Common myeloid progenitor, CD34-positive (primary cell): ENCODE measurements at regions of chr5 and their contacts with region 1.

Region 1: DNA sequence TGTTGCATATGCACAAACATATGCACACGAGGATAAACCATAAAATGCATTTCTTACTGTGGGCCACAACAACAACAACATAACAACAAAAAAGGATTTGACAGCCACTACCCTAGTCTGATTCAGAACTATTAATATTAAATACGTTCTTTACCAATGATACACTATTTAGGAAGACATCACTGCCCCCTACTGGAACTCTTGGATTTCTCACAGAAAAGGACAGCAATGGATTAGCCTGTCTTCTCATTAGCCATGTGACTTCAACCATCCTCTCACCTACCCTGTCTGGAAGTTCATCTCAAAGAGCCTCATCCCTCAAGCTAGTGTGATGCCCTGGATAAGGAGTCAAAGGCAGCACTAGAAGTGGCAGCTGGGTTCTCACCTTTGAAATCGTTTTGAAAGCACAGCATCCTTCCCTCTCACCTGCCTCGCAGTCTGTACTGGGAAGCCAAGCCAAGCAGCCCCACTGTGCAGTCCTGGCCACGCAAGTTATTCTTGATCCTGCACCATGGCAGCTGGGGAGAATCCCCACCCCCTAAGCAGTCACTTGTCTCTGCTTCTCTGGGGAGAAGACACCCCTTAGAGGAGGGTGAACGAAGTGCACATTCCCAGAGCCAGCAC is 64.6 kb downstream of the SH3TC2 start:
- DNase-seq: peak; percentile 59 to 74 (median 70)
- H3K4me3 ChIP-seq: no peak overlapping the region
- H3K27ac ChIP-seq: no peak overlapping the region
- H3K4me1 ChIP-seq: no peaks in the 10 kb centered on the region
- H3K27me3 ChIP-seq: no peaks in the 10 kb centered on the region

Region 2: DNA sequence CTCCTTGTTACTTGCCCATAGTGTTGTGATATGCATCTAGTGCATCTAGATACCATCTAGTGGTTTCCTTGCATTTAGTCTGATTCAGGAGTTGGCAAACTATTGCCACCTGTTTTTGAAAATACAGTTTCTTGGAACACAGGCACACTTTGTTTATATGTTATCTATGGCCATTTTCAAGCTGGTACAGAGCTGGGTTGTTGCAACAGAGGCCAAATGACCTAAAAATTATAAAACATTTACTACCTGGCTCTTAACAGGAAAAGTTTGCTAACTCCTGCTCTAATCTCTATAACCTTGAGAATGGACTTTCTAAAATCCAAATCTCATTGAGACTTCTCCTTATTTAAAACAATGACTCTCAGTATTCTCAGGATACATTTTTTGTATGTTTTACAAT is 633.9 kb before region 1 on chr5:
- CTCF ChIA-PET with region 1: no interaction called
- POLR2A ChIA-PET with region 1: no interaction called
- DNase-seq: no peak
- H3K4me3 ChIP-seq: no peak overlapping the region
- H3K27ac ChIP-seq: no peak overlapping the region
- H3K4me1 ChIP-seq: no peaks in the 10 kb centered on the region
- H3K27me3 ChIP-seq: no peaks in the 10 kb centered on the region

Region 3: DNA sequence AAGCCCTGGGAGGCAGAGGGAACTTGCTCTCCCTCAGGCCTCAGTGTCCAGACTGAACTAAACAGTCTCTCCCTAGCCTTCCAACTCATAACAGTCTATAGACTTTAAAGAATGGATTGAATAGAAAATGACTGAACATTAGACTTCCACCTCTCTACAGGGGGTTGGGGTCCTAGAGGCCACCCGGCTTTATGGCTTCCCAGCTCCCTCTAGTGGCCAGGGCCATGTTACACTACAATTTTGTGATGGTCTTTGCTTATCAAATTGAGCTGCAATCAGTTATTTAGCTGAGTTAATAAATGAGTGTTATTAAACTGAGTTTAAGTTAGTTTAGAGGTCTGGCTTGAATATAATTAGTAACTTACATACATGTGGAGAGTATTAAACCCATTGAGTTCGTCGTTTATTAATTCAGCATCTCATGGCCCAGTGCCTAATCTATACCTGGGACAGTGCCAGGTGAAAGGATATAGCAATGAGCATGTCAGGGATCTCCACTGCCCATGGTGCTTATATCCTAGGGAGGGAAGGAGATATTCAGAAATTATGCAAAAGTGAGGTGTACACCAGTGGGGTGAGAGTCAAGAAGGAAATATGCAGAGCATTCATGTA is 40.6 kb before region 1 on chr5:
- CTCF ChIA-PET with region 1: interaction called, 10 read pairs
- POLR2A ChIA-PET with region 1: no interaction called
- DNase-seq: peak; percentile 54 to 77 (median 73)
- H3K4me3 ChIP-seq: no peak overlapping the region
- H3K27ac ChIP-seq: no peak overlapping the region
- H3K4me1 ChIP-seq: peaks cover 0 to 11% (median 2%) of the 10 kb centered on the region in 4 experiments
- H3K27me3 ChIP-seq: no peaks in the 10 kb centered on the region

Region 4: DNA sequence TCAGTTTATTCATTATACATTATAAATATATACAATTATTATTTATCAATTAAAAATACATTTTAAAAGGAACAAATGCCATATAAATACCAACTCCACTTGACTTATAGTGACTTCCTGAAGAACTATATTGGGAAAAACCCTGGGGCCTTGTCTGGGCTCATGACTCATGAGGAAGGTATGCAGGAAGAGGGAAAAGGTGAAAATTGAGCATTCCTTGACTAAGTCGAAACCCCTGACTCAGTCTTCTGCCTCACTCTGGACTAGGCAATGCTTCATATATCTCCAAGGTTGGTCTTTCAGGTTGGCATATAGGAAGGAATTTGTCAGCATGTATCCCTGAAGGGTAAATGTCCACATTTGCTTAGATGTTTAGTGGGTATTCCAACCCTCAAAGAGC is 14.0 kb before region 1 on chr5:
- CTCF ChIA-PET with region 1: interaction called, 15 read pairs
- POLR2A ChIA-PET with region 1: no interaction called
- DNase-seq: no peak
- H3K4me3 ChIP-seq: no peak overlapping the region
- H3K27ac ChIP-seq: no peak overlapping the region
- H3K4me1 ChIP-seq: peaks cover 0 to 6% (median under 1%) of the 10 kb centered on the region in 4 experiments
- H3K27me3 ChIP-seq: no peaks in the 10 kb centered on the region